Lower leg skin (tissue), 4 donors: ENCODE measurements at regions of chr2 and their contacts with region 1.

Region 1: DNA sequence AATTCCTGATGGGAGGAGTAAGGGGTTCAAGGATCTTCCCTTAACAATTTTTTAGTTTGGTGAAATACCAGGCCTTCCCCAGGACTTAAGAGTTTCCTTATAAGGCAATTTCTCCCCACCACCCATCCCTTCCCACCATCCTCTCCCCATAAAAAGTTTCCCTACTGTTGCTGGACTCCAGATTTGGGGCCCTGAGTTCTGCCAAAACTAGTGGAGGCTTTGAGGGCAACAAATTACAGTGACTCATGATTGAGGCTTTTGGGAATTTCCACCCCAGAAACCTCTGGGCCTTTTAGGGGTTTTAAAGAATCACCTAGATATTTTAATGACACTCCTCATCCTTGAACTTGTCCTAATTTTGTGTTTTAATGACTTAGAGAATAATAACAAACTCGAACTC is 14.3 kb upstream of the EN1 start:
- DNase-seq: peak in 1 of 2 donors; percentile 29
- H3K4me3 ChIP-seq: no peak overlapping the region
- CTCF ChIP-seq: no peak
- POLR2A ChIP-seq: no peak

Region 2: DNA sequence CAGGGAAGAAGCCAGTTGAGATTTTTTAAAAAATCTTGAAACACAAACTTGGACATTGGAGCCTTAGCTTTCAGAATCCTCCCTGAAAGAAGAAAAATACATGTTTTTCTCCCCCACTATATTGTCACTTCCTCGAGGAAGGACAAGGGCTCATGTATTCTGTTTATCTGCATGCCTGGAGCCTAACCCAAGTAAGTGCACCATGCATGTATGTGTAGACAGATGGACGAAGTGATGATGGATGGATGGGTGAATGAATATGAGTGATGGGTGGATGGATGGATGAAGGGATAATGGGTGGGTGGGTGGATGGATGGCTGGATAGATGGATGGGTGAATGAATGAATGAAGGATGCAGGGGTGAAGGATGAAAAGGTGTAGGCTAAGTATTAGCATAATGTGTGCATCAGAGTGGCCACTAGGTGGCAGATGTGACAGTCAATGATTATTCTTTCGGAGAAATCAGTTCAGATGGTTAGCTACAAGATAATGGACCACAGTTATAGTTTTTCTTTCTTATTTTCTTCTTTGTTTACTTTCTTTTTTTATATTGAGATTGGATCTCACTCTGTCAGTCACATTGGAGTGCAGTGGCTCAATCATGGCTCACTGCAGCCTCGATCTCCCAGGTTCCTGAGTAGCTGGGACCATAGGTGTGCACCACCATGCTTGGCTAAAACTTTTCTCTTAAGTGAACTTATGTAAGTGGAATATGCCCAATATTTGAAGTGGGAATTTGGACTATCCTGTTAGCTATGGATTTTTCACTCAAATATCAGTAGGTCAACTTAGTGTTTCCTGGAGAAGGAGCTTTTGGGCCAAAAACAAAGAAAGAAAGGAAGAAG is 829.3 kb before region 1 on chr2:
- intact Hi-C with region 1: loop called (anchors 5 kb)
- DNase-seq: peak in 1 of 2 donors; percentile 31
- H3K4me3 ChIP-seq: no peak overlapping the region
- CTCF ChIP-seq: peak in 1 of 3 donors; percentile 12
- POLR2A ChIP-seq: no peak

Region 3: GRCh38 chr2:118738524-118739308 is 123.0 kb before region 1 on chr2:
- intact Hi-C with region 1: no loop called
- DNase-seq: peak; percentile 79 to 86
- H3K4me3 ChIP-seq: no peak overlapping the region
- CTCF ChIP-seq: no peak
- POLR2A ChIP-seq: no peak